AG04450 (cell line): ENCODE measurements at regions of chr4 and their contacts with region 1.

Region 1: DNA sequence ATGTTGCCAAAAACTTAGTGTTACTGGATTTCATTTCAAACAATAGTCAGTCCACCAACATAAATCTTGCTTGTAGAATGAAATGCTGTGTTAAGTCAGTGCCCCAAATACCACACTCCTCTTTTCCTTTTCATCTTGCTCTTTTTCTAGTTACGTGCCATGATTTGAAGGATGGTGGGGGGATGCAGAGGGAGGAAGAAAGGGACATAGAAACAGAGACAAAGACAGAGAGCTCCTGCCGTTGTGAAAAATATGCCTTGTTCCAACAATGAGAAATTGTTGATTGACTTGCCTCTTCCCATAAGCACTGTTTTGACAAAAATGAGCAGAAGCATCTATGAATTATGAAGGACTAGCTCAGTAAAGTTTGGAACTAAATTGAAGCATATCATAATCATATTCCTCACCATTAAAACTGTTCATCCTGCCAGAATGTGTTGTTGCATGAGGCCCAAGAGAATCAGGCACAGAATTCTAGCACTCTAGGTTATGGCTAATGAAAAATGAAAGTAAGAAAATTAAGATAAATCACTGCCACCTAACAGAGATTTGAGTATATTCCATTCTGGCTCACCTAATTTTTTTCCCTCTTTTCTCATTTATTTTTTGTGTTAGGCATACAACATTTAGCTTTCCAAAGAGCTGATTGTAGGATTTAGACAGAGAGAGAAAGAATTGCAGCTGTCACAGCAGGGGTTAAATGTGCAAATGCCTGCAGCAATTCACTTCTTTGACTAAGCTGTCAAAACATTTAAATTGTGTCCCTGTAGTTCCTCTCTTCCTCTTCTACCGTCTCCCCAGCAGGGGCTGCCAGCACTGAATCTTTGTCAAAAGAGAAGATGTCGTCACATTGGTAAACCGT is 111.6 kb upstream of the PTPN13 start:
- DNase-seq: no peak
- H3K4me3 ChIP-seq: no peak overlapping the region
- H3K27ac ChIP-seq: no peak overlapping the region
- H3K27me3 ChIP-seq: no peaks in the 10 kb centered on the region
- CTCF ChIP-seq: peak; percentile 40

Region 2: DNA sequence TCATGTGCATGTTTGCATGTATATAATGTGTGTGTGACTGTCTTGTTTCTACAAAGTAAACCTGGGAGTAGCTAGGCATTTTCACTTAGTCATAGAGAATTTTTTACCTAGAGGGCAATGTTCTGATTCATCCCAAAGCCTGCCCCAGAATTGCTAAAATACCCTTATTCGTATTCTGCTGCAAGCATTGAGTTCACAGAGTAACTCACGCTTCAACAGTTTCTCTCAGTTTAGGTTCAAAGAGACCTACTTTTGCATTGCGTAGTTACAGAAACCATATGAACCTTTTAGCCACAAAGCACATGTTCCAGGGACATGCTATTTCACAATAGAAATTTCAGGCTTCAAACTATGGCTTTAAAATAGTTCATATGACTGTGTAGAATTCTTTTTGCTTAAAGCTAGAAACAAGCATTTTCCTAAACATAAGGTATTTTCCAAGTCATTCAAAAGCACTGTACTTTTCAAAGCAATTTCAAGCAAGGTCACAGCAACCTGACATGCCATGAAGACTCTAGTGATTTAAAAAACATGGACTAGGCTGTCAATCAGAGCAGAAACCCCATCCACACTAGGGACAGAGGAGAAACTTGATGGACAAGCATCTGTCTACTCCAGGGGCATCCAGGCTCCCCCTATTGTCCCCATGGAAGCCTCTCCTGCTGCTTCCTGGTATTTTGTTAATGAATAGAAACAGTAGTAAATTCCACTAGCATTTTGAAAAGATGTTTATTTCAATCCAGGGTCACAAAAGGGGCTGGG is 41.2 kb before region 1 on chr4:
- CTCF ChIA-PET with region 1: no interaction called
- POLR2A ChIA-PET with region 1: no interaction called
- DNase-seq: no peak
- H3K4me3 ChIP-seq: no peak overlapping the region
- H3K27ac ChIP-seq: no peak overlapping the region
- H3K27me3 ChIP-seq: no peaks in the 10 kb centered on the region
- CTCF ChIP-seq: no peak

Region 3: GRCh38 chr4:86837691-86838503 is 355.4 kb after region 1 on chr4:
- CTCF ChIA-PET with region 1: interaction called, 12 read pairs
- POLR2A ChIA-PET with region 1: no interaction called
- DNase-seq: no peak
- H3K4me3 ChIP-seq: no peak overlapping the region
- H3K27ac ChIP-seq: no peak overlapping the region
- H3K27me3 ChIP-seq: no peaks in the 10 kb centered on the region
- CTCF ChIP-seq: no peak